ENCODE measurements at regions of chr9 and their contacts with region 1.

Region 1: DNA sequence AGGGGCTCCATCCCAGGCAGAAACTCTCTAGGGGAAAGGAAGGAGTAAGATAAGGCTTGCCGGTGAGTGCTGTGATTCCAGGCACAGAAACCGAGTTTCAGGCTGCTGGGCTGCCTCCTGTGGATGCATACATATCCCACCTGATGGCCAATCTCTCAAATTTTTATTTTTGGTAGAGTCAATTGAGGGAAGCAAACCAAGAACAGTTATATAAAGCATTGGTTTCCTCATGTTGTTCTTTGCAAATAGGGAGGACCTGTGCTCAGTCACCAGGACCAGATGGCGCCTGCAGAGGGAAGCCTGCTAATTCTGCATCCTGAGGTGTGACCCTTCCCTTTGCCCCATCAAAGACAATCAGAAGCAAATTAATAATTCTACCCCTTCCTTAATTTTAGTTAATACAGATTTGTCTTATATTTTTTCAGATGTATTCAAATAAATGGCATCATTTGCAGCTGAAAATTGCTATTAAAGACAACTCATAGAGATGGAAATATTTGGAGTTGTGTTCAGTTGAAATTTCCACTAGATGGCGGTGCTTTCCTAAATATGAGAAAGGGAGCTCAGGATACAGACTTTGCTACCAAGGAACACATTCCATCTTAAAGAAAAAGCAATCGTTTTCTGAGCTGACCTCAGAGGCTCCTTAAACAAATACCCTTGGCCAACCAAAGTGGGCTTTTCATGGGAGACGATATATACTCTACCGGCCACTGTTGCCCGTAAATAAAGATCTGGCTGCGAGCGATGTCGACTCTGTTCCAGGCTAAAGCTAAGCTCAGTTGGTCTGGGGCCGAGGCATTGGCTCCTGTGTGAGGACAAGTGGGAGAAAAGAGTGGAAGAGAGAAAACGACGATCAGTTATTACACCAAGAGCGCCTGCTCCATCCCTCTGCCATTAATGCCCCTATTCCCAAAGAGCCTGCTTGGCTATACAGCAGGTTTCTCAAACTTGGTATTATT is 225.7 kb upstream of the KLF9 start:
- DNase-seq: peak; percentile 57 to 88
- H3K4me3 ChIP-seq: no peak overlapping the region
- H3K4me1 ChIP-seq: peaks cover 28% of the 10 kb centered on the region
- H3K27me3 ChIP-seq: no peaks in the 10 kb centered on the region

Region 2: GRCh38 chr9:70835323-70835722 is 195.2 kb after region 1 on chr9:
- in situ Hi-C with region 1: loop called (anchors 25 kb)
- DNase-seq: no peak
- H3K4me3 ChIP-seq: no peak overlapping the region
- H3K4me1 ChIP-seq: peaks cover 25% of the 10 kb centered on the region
- H3K27me3 ChIP-seq: no peaks in the 10 kb centered on the region

Region 3: DNA sequence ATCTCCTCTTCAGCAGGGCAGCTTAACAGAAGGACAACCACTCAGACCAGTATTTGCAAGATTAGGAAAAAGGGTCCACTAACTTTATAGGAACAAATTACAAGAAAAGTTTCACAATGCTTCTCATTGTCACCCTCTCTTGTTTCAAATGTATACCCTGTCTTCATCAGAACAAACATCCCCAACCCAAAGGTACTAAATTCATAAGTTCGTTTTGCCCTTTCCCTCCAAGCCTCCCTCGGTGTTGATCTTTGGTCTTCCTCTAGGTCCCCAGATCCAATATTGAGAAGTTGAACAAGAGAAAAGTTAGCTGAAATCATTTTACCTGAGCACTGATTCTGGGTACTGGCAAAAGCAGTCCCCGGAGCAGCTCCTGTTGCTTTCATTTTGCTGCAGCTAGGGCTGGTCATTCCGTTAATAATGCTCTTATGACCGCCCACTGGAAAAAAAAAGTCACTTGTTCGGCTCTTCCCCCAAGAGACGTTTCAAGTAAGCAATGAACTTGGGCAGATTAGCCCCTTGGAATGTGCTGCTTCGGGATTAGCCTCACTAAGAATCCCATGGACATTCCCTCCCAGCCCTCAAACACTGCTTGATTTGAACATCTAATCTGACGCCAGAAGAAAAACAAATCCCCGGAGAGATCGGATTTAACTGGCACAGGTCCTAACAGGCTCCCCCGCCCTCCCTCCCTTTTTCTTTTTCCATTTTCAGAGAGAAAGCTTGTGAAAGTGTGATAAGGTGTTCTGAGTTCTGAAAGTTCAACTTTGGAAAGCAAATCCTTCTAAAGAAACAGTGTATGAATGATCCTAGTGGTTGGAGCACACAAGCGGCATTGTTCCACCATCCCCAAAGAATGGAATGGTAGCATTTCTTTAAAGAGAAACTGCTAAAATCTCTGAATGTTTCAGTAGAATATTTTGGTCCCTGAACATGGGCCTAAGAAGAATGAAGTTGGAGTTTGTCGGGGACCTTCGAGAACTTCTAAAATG is 228.8 kb after region 1 on chr9:
- in situ Hi-C with region 1: no loop called
- DNase-seq: peak; percentile 89 to 98
- H3K4me3 ChIP-seq: peak overlapping the region; percentile 52
- H3K4me1 ChIP-seq: peaks cover 35% of the 10 kb centered on the region
- H3K27me3 ChIP-seq: no peaks in the 10 kb centered on the region

Region 4: DNA sequence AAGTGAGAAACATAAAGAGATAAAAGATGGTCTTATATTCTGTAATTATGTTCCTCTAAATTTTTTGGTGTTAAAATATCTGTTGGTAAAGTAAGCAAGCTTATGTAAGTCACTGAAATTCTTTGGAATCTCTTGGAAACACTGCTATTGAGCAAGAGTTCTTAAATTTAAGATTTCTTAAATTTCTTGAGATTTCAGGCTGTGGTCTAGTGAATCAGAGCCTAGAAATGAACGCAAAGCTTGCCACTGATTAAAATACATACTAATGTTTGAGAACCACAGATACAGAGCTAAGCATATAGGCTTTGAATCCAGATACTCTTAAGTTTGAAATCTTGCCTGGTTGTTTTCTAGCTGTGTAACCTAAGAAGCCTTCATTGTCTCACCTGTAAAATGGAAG is 347.9 kb after region 1 on chr9:
- in situ Hi-C with region 1: loop called (anchors 25 kb)
- DNase-seq: no peak
- H3K4me3 ChIP-seq: no peak overlapping the region
- H3K4me1 ChIP-seq: no peaks in the 10 kb centered on the region
- H3K27me3 ChIP-seq: no peaks in the 10 kb centered on the region

Region 5: GRCh38 chr9:71249729-71250317 is 609.7 kb after region 1 on chr9:
- in situ Hi-C with region 1: loop called (anchors 10 kb)
- DNase-seq: peak; percentile 56 to 91
- H3K4me3 ChIP-seq: no peak overlapping the region
- H3K4me1 ChIP-seq: peaks cover 28% of the 10 kb centered on the region
- H3K27me3 ChIP-seq: no peaks in the 10 kb centered on the region; the same call in 1 of the 2 replicates

Measured in HAP-1 (cell line).